OCI-LY7 (cell line): ENCODE measurements at regions of chr19 and their contacts with region 1.

Region 1: DNA sequence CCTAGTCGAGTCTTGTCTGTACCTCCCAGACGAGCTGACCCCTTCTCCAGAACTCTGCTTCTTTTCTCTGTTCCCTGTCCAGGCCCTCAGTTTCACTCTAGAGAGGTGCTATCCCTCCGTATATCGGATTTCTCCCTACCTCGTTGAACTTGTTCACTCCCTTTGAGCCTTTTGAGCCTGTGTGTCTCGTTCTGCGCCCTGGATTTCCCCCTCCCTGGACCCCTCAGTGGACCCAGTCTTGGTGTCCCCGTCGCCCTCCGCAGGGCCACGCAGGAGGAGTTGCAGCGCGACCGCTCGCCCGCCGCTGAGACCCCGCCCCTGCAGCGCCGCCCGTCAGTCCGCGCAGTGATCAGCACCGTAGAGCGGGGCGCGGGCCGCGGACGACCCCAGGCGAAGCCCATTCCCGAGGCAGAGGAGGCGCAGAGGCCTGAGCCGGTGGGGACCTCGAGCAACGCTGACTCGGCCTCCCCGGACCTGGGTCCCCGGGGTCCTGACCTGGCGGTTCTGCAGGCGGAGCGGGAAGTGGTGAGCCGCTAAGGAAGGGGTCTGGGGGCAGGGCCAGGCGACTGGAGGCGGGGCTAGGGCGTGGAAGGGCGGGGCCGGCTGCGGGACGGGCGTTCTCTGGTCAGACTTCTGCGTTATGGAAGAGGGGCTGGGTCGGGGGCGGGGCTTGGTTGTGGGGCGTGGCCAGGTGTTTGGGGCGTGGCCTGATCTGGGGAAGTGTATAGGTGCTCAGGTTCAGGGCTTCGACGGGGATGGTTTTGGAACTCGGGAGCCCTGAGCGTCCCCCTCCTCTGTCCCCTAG is 5.5 kb downstream of the EPS8L1 start:
- DNase-seq: peak; percentile 90
- H3K4me3 ChIP-seq: peak overlapping the region; percentile 70
- H3K27ac ChIP-seq: peak overlapping the region; percentile 56
- H3K4me1 ChIP-seq: peaks cover 20% of the 10 kb centered on the region
- CTCF ChIP-seq: no peak; the same call in 1 of the 2 replicates

Region 2: GRCh38 chr19:55099533-55100506 is 18.6 kb after region 1 on chr19:
- CTCF ChIA-PET with region 1: no interaction called
- POLR2A ChIA-PET with region 1: no interaction called
- intact Hi-C with region 1: no loop called
- DNase-seq: no peak
- H3K4me3 ChIP-seq: no peak overlapping the region
- H3K27ac ChIP-seq: no peak overlapping the region
- H3K4me1 ChIP-seq: no peaks in the 10 kb centered on the region
- CTCF ChIP-seq: peak; percentile 56

Region 3: GRCh38 chr19:55166530-55167268 is 85.5 kb after region 1 on chr19 and contains the start of gene DNAAF3:
- CTCF ChIA-PET with region 1: no interaction called
- POLR2A ChIA-PET with region 1: no interaction called
- intact Hi-C with region 1: loop called (anchors 2 kb)
- DNase-seq: peak; percentile 96
- H3K4me3 ChIP-seq: peak within 1 kb of the TSS; percentile 47
- H3K27ac ChIP-seq: no peak within 1 kb of the TSS
- H3K4me1 ChIP-seq: peaks cover 7% of the 10 kb centered on the region
- CTCF ChIP-seq: no peak
- total RNA-seq, gene DNAAF3: 0.85 and 2.8 TPM in 2 replicates